IMR-90 (cell line): ENCODE measurements at regions of chr2 and their contacts with region 1.

Region 1: GRCh38 chr2:108933691-108934117 is 55.3 kb downstream of the EDAR start:
- DNase-seq: no peak
- ATAC-seq: no peak
- H3K4me3 ChIP-seq: no peak overlapping the region
- H3K27ac ChIP-seq: no peak overlapping the region
- H3K4me1 ChIP-seq: no peaks in the 10 kb centered on the region
- H3K27me3 ChIP-seq: peaks cover 85% of the 10 kb centered on the region
- CTCF ChIP-seq: no peak
- POLR2A ChIP-seq: no peak
- RAD21 ChIP-seq: no peak

Region 2: GRCh38 chr2:108884619-108885018 is 49.1 kb before region 1 on chr2:
- CTCF ChIA-PET with region 1: no interaction called
- POLR2A ChIA-PET with region 1: no interaction called
- dilution Hi-C with region 1: no loop called
- in situ Hi-C with region 1: no loop called
- intact Hi-C with region 1: no loop called
- DNase-seq: no peak
- ATAC-seq: no peak
- H3K4me3 ChIP-seq: no peak overlapping the region
- H3K27ac ChIP-seq: no peak overlapping the region
- H3K4me1 ChIP-seq: no peaks in the 10 kb centered on the region
- H3K27me3 ChIP-seq: no peaks in the 10 kb centered on the region
- CTCF ChIP-seq: no peak
- POLR2A ChIP-seq: no peak
- RAD21 ChIP-seq: no peak

Region 3: GRCh38 chr2:108968619-108969018 is 34.9 kb after region 1 on chr2:
- CTCF ChIA-PET with region 1: no interaction called
- POLR2A ChIA-PET with region 1: no interaction called
- dilution Hi-C with region 1: no loop called
- in situ Hi-C with region 1: no loop called
- intact Hi-C with region 1: no loop called
- DNase-seq: no peak
- ATAC-seq: no peak
- H3K4me3 ChIP-seq: no peak overlapping the region
- H3K27ac ChIP-seq: no peak overlapping the region
- H3K4me1 ChIP-seq: no peaks in the 10 kb centered on the region
- H3K27me3 ChIP-seq: peaks cover 74% of the 10 kb centered on the region
- CTCF ChIP-seq: no peak
- POLR2A ChIP-seq: no peak
- RAD21 ChIP-seq: no peak

Region 4: DNA sequence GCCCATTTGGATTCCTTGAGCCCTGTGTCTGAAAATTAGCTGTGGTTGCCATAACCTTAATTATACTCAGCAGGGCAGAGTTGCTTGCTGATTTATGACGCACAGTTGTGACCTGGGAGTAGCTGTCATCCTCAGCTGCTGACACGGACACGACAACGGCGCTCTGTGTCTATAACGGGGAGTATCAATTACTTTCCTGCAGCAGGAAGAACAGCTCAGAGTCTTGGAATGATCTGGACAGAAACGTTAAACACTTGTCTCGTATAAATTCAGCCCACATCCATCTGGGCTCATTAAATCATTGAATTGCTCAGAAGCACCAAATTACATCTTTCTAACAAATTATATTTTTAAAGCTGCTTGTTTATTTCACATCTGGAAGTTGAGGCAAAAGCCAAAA is 563.8 kb after region 1 on chr2:
- CTCF ChIA-PET with region 1: no interaction called
- POLR2A ChIA-PET with region 1: no interaction called
- dilution Hi-C with region 1: no loop called
- in situ Hi-C with region 1: loop called (anchors 5 kb)
- intact Hi-C with region 1: no loop called
- DNase-seq: peak; percentile 95
- ATAC-seq: peak; percentile 89
- H3K4me3 ChIP-seq: no peak overlapping the region
- H3K27ac ChIP-seq: peak overlapping the region; percentile 42; the same call in 1 of the 2 replicates
- H3K4me1 ChIP-seq: peaks cover 14% of the 10 kb centered on the region
- H3K27me3 ChIP-seq: no peaks in the 10 kb centered on the region
- CTCF ChIP-seq: no peak
- POLR2A ChIP-seq: no peak
- RAD21 ChIP-seq: no peak